Transverse colon (tissue), 4 donors: ENCODE measurements at regions of chr17 and their contacts with region 1.

Region 1: GRCh38 chr17:71942626-71943025 is 178.2 kb upstream of the SOX9 start:
- DNase-seq: peak; percentile 17
- H3K4me3 ChIP-seq: no peak overlapping the region
- H3K27ac ChIP-seq: peak overlapping the region; percentile 63 to 78 (median 66)
- H3K4me1 ChIP-seq: peaks cover 0 to 23% (median 14%) of the 10 kb centered on the region in 4 donors
- H3K27me3 ChIP-seq: no peaks in the 10 kb centered on the region
- CTCF ChIP-seq: no peak
- EP300 ChIP-seq: no peak
- POLR2A ChIP-seq: no peak

Region 2: DNA sequence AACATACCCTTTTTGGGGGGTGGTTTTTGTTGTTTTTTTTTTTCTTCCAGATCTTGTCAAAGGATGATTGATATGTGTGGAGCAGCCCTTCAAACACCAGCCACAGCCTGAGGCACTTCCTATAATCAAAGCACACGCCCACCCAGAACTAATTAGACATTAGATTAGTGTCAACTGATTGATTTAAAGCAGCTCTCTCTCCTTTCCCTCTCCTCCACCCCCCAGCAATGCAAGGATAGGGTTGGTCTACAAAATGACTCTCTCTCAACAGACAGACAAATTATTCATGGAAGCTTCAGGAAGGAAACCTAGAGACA is 72.1 kb before region 1 on chr17:
- in situ Hi-C with region 1: loop called in 1 of 4 experiments (anchors 10 kb)
- intact Hi-C with region 1: no loop called
- DNase-seq: no peak
- H3K4me3 ChIP-seq: no peak overlapping the region
- H3K27ac ChIP-seq: no peak overlapping the region
- H3K4me1 ChIP-seq: peaks cover 0 to 13% (median 1%) of the 10 kb centered on the region in 4 donors
- H3K27me3 ChIP-seq: no peaks in the 10 kb centered on the region
- CTCF ChIP-seq: no peak
- EP300 ChIP-seq: no peak
- POLR2A ChIP-seq: no peak

Region 3: DNA sequence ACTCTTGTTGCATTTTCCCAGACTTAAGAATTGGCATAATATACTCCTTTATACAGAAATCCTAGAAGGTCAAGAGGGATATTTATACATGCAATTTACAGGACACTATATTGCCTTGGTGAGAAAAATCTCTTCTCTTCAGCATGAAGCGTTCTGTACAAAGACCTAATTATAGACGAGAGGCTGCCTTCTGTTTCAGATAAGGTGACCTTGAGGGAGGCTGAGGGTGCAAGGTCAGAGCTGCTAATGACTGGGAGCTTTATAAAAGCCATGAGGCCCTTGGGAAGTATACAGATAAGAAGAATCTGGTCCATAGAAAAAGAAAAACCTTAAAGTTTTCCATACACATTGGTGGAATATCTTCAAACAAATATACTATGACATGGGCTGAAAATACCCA is 21.9 kb after region 1 on chr17:
- in situ Hi-C with region 1: no loop called
- intact Hi-C with region 1: loop called (anchors 1 kb)
- DNase-seq: no peak
- H3K4me3 ChIP-seq: no peak overlapping the region
- H3K27ac ChIP-seq: no peak overlapping the region
- H3K4me1 ChIP-seq: no peaks in the 10 kb centered on the region
- H3K27me3 ChIP-seq: no peaks in the 10 kb centered on the region
- CTCF ChIP-seq: no peak
- EP300 ChIP-seq: no peak
- POLR2A ChIP-seq: no peak

Region 4: DNA sequence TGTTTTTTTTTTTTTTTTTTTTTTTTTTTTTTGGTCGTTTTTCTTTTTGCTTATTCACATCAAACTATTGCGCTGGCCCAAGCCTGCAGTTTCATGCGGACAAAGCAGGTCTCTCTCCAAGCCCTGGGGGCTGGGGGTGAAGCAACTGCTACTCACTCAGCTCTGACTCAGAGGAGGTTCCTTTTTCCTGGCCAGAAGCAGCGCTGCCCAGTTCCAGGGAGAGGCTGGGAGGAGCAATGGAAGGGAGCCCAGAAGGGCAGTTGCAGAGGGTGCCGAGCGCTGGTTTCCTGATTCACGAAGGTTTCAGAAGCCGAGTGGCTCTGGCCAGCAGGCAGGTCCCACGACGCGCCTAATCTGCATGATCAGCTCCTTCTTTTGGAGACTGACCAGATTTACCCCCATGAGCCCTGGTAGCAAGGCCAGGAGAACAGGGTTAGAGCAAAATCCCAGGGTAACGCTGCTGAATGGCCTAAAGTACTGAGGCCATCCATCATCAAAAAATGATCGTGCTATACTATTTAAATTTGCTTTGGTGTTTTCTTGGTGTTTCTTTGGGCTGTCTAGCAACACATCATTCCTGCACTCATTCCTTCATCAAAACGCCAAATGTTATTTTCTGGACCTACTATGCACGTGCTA is 33.5 kb after region 1 on chr17:
- in situ Hi-C with region 1: no loop called
- intact Hi-C with region 1: no loop called
- DNase-seq: peak; percentile 79
- H3K4me3 ChIP-seq: peak overlapping the region in 1 of 4 donors; percentile 38
- H3K27ac ChIP-seq: peak overlapping the region; percentile 83 to 89 (median 88)
- H3K4me1 ChIP-seq: peaks cover 0 to 26% (median 20%) of the 10 kb centered on the region in 4 donors
- H3K27me3 ChIP-seq: no peaks in the 10 kb centered on the region
- CTCF ChIP-seq: no peak
- EP300 ChIP-seq: no peak
- POLR2A ChIP-seq: no peak

Region 5: DNA sequence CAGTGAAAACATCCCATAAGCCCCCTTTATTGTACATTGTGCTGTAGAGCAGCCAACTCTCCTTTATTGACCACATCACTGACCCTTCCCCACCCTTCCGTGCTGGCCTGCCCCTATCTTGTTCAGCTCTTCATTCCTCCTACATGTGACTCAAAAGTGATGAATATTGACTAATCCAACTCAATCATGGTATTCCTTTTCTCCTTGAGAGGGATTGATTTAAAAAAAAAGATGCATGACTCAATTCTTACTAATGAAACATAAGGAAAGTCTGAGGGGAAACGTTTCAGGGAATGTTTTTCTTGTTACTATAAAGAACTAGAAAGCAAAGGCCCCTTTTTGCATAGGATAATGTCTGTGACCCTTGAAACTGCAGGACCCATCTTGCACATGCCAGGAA is 53.0 kb after region 1 on chr17:
- in situ Hi-C with region 1: loop called in 1 of 4 experiments (anchors 10 kb)
- intact Hi-C with region 1: no loop called
- DNase-seq: no peak
- H3K4me3 ChIP-seq: no peak overlapping the region
- H3K27ac ChIP-seq: no peak overlapping the region
- H3K4me1 ChIP-seq: no peaks in the 10 kb centered on the region
- H3K27me3 ChIP-seq: no peaks in the 10 kb centered on the region
- CTCF ChIP-seq: no peak
- EP300 ChIP-seq: no peak
- POLR2A ChIP-seq: no peak

Region 6: GRCh38 chr17:72236915-72237633 is 294.4 kb after region 1 on chr17:
- in situ Hi-C with region 1: no loop called
- intact Hi-C with region 1: no loop called
- DNase-seq: no peak
- H3K4me3 ChIP-seq: no peak overlapping the region
- H3K27ac ChIP-seq: no peak overlapping the region
- H3K4me1 ChIP-seq: peaks cover 0 to 10% (median 9%) of the 10 kb centered on the region in 4 donors
- H3K27me3 ChIP-seq: no peaks in the 10 kb centered on the region
- CTCF ChIP-seq: no peak
- EP300 ChIP-seq: no peak
- POLR2A ChIP-seq: no peak